Activated naive CD4-positive, alpha-beta T cell treated with anti-CD3 and anti-CD28 coated beads for 36 hours (primary cell): ENCODE measurements at regions of chr11 and their contacts with region 1.

Region 1: DNA sequence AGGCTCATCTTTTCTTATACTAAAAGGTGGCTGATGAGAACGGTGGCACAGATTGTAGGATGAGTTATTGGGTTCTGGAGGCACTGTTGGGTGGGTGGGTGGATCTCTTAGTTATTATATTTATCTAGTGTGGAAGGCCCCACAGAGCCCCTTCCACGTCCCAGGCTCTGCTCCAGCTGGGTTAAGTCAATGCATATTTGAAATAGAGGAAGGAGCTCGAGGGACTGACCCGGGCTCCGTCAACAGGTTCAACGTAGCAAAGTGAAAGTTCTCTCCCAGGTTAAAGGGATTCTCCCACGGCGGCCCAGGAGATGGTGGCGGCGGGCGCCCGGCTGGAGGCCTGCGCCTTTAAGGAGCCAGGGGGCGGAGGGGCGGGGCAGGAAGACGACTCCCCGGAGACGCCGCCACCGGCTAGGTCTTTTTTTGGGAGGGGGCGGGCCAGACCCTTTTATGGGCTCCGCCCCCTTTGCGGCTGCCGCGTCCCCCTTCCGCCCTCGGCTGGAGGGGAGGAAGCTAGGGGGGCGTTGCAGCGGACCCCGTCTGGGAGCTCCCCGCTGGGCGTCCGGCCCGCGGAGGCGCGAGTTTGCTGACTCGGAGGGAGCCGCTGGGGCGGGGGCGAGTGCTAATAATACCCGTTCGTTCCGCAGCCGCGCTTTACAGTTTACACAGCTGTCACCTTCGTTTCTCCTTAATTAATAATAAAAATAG is 1.5 kb upstream of the INPPL1 start:
- DNase-seq: peak; percentile 96
- H3K4me3 Mint-ChIP-seq: peak overlapping the region; percentile 73
- H3K27ac Mint-ChIP-seq: peak overlapping the region; percentile 75
- H3K4me1 Mint-ChIP-seq: peaks cover 20% of the 10 kb centered on the region
- H3K27me3 Mint-ChIP-seq: peaks cover 3% of the 10 kb centered on the region

Region 2: DNA sequence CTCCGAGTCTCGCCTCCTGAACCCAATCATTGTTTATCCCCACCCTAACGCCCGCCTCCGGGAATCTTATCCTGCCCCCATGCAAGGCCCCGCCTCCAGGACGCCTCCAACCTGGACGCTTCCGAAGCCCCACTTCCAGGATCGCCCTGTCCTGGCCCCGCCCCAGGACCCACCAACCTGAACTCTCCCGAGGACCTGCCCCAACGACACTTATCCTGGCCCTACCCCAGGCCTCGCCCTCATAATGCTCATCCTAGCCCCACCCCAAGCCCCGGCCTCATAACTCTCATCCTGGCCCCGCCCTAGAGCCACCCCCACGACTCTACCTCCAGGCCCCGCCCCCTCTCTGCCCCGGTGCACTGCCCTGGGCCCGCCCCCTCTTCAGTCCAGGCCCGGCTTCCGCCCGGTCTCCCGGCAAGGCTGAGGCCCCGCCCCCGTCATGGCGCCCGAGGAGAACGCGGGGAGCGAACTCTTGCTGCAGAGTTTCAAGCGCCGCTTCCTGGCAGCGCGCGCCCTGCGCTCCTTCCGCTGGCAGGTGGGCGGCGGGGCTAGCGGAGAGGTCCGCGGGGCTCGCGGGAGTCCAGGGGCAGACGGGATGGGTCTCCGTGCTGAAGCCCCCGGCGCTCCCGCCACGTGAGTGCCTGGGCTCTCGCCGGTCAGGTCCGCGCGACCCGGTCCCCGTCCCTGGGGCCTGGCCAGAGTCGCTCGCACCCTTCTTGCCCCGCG is 435.8 kb before region 1 on chr11:
- CTCF ChIA-PET with region 1: no interaction called
- intact Hi-C with region 1: loop called (anchors 1 kb)
- DNase-seq: peak; percentile 97
- H3K4me3 Mint-ChIP-seq: peak overlapping the region; percentile 95
- H3K27ac Mint-ChIP-seq: peak overlapping the region; percentile 96
- H3K4me1 Mint-ChIP-seq: peaks cover 22% of the 10 kb centered on the region
- H3K27me3 Mint-ChIP-seq: no peaks in the 10 kb centered on the region

Region 3: DNA sequence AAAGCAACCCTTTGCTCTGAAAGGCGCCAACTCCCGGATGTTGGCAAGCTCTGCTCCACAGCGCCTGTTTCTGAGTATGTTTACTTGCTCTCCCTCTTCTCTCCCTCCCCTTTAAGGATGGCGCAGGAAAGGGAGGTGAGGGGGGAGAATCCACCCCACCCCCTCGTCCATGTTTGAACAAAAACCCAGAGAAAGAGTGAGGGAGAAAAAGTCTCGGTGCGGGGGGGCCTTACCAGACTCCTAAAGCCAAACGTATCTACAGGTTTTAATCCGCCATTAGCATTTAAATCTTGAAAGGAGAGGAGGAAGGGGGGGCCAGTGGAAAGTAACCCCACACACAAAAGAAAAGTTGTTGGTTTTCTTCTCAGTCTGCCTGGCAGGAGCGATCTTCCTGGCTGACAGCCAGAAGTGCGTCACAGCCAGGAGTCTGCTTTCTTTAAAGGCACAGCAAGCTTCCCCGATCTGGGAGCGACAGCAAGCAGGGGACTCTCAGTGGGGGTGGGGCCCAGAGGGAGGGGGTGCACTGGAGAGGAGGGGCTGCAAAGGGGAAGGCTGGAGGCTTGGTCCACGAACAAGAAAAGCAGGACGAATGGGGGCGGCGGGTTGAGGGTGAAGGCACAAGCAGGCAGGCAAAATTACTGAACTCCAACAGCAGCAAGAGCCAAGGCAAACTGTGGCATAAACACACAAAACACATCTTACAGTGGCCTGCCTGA is 182.2 kb before region 1 on chr11:
- CTCF ChIA-PET with region 1: no interaction called
- intact Hi-C with region 1: loop called (anchors 1 kb)
- DNase-seq: peak; percentile 85
- H3K4me3 Mint-ChIP-seq: no peak overlapping the region
- H3K27ac Mint-ChIP-seq: no peak overlapping the region
- H3K4me1 Mint-ChIP-seq: peaks cover 44% of the 10 kb centered on the region
- H3K27me3 Mint-ChIP-seq: no peaks in the 10 kb centered on the region

Region 4: DNA sequence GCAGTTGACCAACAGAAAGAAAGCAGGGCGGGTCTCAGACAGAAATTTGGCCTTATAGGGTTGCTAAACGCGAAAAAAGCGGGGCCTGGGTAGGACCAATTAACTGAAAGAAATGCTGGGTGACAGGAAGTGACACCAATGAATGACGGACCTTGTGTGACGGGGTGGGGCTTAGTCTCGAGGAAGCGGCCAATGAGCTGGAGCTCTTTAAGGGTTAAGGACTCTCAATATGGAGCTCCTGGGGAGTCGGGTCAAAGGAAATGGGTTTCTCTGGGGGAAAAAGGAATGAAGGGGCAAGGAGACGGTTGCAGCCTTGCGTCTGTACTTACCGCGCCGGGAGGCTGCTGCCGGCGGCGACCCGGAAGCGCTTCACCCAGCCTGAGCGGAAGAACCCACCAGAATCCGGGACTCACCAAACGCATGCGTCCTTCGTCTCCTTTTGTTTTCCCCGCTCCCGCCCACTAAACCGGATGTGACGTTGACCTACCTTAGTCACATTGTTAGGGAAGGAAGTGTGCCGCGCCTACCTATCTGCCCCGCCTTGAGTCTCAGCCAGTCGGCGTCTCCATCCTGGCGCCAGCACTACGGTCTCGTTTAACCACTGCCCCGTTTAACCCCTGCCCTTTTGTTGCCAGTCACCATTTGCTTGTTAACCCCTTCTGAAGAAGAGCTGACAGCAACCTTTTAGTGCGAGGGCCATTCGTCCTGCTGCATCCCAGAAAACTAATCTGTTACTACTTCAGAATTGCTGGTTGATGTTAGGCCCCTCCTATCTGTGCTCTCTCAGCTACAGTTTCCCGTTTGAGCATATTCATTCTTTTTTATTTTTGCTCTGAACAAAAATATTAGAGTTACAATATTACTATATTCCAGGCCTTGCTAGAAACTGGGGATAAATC is 110.5 kb before region 1 on chr11 and contains the start of gene ANAPC15:
- CTCF ChIA-PET with region 1: interaction called, 4 read pairs
- intact Hi-C with region 1: loop called (anchors 1 kb)
- DNase-seq: peak; percentile 100
- H3K4me3 Mint-ChIP-seq: peak within 1 kb of the TSS; percentile 85
- H3K27ac Mint-ChIP-seq: peak within 1 kb of the TSS; percentile 97
- H3K4me1 Mint-ChIP-seq: peaks cover 12% of the 10 kb centered on the region
- H3K27me3 Mint-ChIP-seq: no peaks in the 10 kb centered on the region
- total RNA-seq, gene ANAPC15: 69.1 to 70.3 TPM

Region 5: DNA sequence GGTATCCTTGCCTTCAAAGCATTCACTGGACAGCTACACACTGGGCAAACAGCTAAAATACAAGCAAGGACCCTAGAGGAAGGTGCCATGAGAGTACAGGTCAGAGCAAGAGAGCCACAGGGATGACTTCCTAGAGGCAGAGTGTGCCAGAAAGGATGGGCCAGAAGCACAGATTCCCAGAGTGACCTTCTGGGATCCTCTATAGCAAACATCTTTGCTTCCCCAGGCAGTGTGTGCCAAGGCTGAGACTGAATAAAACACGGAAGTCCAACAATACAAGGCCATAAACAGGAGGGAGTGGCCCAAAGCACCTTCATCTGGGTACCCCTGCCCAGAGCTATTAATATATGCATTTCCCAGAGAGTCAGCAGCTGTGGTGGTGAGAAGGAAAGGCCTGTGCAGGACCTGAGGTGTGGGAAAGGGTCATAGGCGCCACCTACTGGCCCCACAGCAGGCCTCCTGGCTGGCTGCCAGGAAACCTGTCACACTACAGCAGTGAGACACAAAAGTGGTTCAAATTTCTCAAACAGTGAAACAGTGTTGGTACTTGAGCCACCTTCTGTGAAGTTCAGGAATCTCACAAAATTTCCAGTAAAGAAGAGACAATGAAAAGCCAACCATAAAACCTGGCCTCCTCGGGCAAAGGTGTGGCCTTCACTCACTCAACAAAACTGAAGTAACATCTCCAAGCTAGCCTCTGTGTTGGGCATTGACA is 191.0 kb after region 1 on chr11:
- CTCF ChIA-PET with region 1: interaction called, 5 read pairs
- intact Hi-C with region 1: loop called (anchors 5 kb)
- DNase-seq: peak; percentile 91
- H3K4me3 Mint-ChIP-seq: no peak overlapping the region
- H3K27ac Mint-ChIP-seq: no peak overlapping the region
- H3K4me1 Mint-ChIP-seq: peaks cover 26% of the 10 kb centered on the region
- H3K27me3 Mint-ChIP-seq: no peaks in the 10 kb centered on the region